ENCODE measurements at regions of chr7 and their contacts with region 1.

Region 1: GRCh38 chr7:105013221-105013815 is 687 bp upstream of the KMT2E start:
- DNase-seq: peak; percentile 96
- H3K4me3 Mint-ChIP-seq: peak overlapping the region; percentile 99
- H3K27ac Mint-ChIP-seq: peak overlapping the region; percentile 100
- H3K4me1 Mint-ChIP-seq: peaks cover 20% of the 10 kb centered on the region
- H3K27me3 Mint-ChIP-seq: no peaks in the 10 kb centered on the region

Region 2: GRCh38 chr7:103344453-103345149 is 1668.7 kb before region 1 on chr7 and contains the start of gene DNAJC2:
- CTCF ChIA-PET with region 1: no interaction called
- POLR2A ChIA-PET with region 1: no interaction called
- intact Hi-C with region 1: loop called (anchors 5 kb)
- DNase-seq: peak; percentile 90
- H3K4me3 Mint-ChIP-seq: peak within 1 kb of the TSS; percentile 90
- H3K27ac Mint-ChIP-seq: peak within 1 kb of the TSS; percentile 96
- H3K4me1 Mint-ChIP-seq: peaks cover 51% of the 10 kb centered on the region
- H3K27me3 Mint-ChIP-seq: no peaks in the 10 kb centered on the region
- total RNA-seq, gene DNAJC2: 51.1 to 51.5 TPM

Region 3: DNA sequence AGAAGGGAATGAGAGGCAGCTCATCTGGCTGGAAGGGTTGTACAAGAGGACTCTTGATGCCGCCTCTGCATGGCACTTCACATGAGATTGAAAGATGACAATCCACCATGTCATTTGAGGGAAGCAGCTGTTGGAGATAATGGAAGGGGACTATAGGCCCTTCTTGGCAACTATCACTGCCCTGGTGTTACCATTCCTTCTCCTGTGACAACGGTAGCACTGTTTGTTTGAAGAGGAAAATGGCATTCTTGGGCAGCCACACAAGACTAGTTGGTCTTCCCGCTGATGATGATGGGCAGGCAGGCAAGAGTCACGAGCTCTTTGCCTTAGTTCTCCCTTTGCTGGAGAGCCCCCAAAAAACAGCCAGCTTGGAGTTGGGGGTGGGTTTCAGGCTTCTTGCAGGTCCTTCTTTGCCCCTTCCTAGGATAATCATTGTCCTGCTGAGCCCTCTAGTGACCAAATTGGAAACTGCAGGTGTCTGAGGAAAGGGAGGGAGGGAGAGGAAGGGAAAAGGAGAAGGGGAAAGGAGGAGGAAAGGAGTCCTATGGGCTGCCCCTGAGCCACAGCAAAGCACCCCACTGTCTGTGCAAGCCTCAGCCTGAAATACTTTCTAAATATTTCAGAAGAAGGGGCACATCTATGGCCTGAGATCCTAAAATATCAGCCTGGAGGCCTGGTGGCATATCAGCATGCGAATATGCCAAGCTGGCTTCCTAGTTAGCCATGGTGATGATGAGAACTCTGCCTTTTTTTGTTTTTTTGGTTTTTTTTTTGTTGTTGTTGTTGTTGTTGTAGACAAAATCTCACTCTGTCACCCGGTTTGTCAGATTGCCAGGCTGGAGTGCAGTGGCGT is 165.0 kb before region 1 on chr7:
- CTCF ChIA-PET with region 1: no interaction called
- POLR2A ChIA-PET with region 1: no interaction called
- intact Hi-C with region 1: no loop called
- DNase-seq: peak; percentile 55
- H3K4me3 Mint-ChIP-seq: no peak overlapping the region
- H3K27ac Mint-ChIP-seq: no peak overlapping the region
- H3K4me1 Mint-ChIP-seq: no peaks in the 10 kb centered on the region
- H3K27me3 Mint-ChIP-seq: peaks cover 8% of the 10 kb centered on the region

Region 4: GRCh38 chr7:105003275-105003674 is 10.0 kb before region 1 on chr7:
- CTCF ChIA-PET with region 1: interaction called, 3 read pairs
- POLR2A ChIA-PET with region 1: interaction called, 18 read pairs
- intact Hi-C with region 1: no loop called
- DNase-seq: peak; percentile 62
- H3K4me3 Mint-ChIP-seq: peak overlapping the region; percentile 48
- H3K27ac Mint-ChIP-seq: peak overlapping the region; percentile 73
- H3K4me1 Mint-ChIP-seq: peaks cover 86% of the 10 kb centered on the region
- H3K27me3 Mint-ChIP-seq: no peaks in the 10 kb centered on the region

Region 5: GRCh38 chr7:105298439-105298907 is 285.2 kb after region 1 on chr7:
- CTCF ChIA-PET with region 1: no interaction called
- POLR2A ChIA-PET with region 1: interaction called, 3 read pairs
- intact Hi-C with region 1: loop called (anchors 1 kb)
- DNase-seq: peak; percentile 69
- H3K4me3 Mint-ChIP-seq: peak overlapping the region; percentile 47
- H3K27ac Mint-ChIP-seq: peak overlapping the region; percentile 93
- H3K4me1 Mint-ChIP-seq: peaks cover 59% of the 10 kb centered on the region
- H3K27me3 Mint-ChIP-seq: no peaks in the 10 kb centered on the region

Region 6: DNA sequence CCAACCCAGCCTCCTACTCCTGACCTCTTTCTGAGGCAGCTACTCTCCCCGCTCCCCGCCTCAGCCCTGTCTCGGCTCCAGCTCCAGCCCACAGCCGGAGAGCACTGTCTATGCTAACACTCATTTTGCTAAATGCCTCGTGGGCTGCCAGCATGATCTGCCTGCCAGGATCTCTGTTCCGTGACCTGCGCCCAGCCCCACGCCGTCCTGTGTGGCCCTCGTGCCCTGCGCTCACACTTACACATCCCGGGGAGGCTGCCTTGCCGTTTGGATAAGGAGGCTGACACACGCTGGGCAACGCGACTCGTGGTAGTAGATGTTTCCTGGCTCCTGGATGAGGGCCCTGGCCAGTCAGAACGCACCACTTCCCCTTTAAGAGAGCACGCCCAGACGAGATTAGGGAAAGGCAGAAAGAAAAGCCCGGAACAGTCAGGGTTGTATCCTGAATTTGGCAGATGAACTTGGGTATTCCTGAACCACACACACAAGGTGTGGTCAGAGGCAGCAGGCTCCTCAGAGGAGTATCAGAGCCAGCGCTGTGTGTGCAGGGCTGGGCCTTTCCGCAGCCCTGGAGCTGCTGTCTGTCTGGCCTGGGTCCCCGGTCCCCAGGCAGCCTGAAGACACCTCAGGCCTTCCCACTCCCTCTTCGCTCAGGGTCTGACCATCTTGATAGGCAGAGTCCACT is 665.6 kb after region 1 on chr7:
- CTCF ChIA-PET with region 1: no interaction called
- POLR2A ChIA-PET with region 1: no interaction called
- intact Hi-C with region 1: loop called (anchors 2 kb)
- DNase-seq: peak; percentile 54
- H3K4me3 Mint-ChIP-seq: peak overlapping the region; percentile 78
- H3K27ac Mint-ChIP-seq: peak overlapping the region; percentile 95
- H3K4me1 Mint-ChIP-seq: peaks cover 75% of the 10 kb centered on the region
- H3K27me3 Mint-ChIP-seq: no peaks in the 10 kb centered on the region

Region 7: DNA sequence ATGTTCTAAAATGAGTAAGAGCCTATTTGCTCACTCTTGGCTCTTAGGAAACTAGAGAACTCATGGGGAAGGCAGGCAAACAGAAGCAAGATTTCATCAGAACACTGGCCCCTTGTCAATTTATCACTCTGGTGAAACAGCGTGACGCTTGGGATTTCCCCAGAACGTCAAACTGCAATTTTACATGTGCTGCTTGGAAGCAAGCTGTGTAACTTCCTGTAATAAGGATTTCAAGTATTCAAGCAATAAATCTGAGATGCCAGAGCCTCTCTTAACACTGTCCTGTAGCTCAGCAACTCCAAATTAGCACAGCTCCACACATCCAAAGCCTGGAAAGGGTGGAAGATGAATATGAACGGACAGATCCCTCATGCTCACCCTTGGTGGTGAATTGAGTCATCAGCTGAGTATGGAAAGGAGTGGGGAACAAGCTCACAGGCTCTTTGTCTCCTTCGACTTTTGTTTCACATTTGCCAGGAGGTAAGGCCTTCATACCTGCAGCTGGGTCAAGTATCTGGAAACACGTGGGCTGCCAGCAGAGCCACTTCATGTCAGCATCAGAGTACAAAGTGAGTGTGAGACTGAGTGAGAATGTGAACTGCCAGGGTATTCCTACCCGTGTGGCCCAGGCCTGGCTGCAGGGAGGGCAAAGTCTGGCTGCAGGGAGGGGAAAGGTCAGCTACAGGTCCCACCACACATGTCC is 1411.8 kb after region 1 on chr7:
- CTCF ChIA-PET with region 1: no interaction called
- POLR2A ChIA-PET with region 1: no interaction called
- intact Hi-C with region 1: loop called (anchors 10 kb)
- DNase-seq: peak; percentile 91
- H3K4me3 Mint-ChIP-seq: peak overlapping the region; percentile 65
- H3K27ac Mint-ChIP-seq: peak overlapping the region; percentile 97
- H3K4me1 Mint-ChIP-seq: peaks cover 81% of the 10 kb centered on the region
- H3K27me3 Mint-ChIP-seq: no peaks in the 10 kb centered on the region

Measured in activated CD4-positive, alpha-beta memory T cell treated with anti-CD3 and anti-CD28 coated beads for 36 hours (primary cell).